Heart right ventricle (tissue), 16 donors: ENCODE measurements at regions of chr18 and their contacts with region 1.

Region 1: GRCh38 chr18:70454704-70455322 is 166.0 kb downstream of the SOCS6 start:
- DNase-seq: peak in 1 of 2 donors; percentile 31
- ATAC-seq: peak in 1 of 8 donors; percentile 53
- H3K4me3 ChIP-seq: no peak overlapping the region
- H3K27ac ChIP-seq: no peak overlapping the region
- H3K4me1 ChIP-seq: no peaks in the 10 kb centered on the region
- H3K27me3 ChIP-seq: peaks cover 0 to 25% (median 12%) of the 10 kb centered on the region in 7 donors
- CTCF ChIP-seq: peak; percentile 55 to 83 (median 78)

Region 2: DNA sequence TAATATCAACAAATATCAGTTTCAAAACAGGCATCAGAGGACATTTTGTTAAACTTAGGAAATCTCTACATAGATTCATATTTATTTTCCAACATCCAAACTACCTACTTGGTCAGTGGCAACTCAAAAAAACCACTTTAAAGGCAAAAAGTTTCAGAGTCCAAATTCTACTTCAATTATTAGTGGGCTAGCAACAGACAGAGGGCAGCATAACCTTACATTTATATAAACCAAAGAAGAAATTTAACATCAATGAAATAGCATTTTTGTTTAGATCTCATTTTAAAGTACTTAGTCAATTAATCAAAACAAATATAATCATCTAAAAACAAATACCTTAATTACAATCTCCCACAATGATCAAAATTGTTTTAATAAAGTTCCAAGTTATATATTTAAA is 282.6 kb before region 1 on chr18:
- intact Hi-C with region 1: loop called in 1 of 10 experiments (anchors 5 kb)
- DNase-seq: no peak
- ATAC-seq: no peak
- H3K4me3 ChIP-seq: no peak overlapping the region
- H3K27ac ChIP-seq: no peak overlapping the region
- H3K4me1 ChIP-seq: no peaks in the 10 kb centered on the region
- H3K27me3 ChIP-seq: no peaks in the 10 kb centered on the region
- CTCF ChIP-seq: peak in 7 of 9 donors; percentile 8 to 50 (median 37)

Region 3: DNA sequence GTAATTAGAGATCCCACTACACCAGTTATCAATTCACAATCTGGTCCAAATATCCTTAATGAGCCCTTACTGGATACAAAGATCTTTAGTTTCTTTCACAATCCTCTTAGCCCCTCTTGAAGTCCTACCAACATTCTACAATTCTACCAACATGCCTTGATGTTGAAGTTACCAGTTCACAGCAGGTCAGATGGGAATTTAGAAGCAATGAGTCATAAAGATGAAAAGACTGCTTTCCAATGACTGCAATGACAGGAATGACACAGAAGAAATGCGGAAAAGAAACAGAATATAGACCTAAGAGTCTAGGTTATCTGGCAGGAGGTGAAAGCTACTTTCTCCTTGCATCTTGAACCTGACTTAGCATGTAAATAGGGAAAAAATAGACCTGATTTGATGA is 273.8 kb before region 1 on chr18:
- intact Hi-C with region 1: loop called in 1 of 10 experiments (anchors 5 kb)
- DNase-seq: no peak
- ATAC-seq: peak in 1 of 8 donors; percentile 27
- H3K4me3 ChIP-seq: no peak overlapping the region
- H3K27ac ChIP-seq: peak overlapping the region in 3 of 10 donors; percentile 5 to 28 (median 19)
- H3K4me1 ChIP-seq: peaks cover 0 to 24% (median 6%) of the 10 kb centered on the region in 9 donors
- H3K27me3 ChIP-seq: no peaks in the 10 kb centered on the region
- CTCF ChIP-seq: no peak

Region 4: DNA sequence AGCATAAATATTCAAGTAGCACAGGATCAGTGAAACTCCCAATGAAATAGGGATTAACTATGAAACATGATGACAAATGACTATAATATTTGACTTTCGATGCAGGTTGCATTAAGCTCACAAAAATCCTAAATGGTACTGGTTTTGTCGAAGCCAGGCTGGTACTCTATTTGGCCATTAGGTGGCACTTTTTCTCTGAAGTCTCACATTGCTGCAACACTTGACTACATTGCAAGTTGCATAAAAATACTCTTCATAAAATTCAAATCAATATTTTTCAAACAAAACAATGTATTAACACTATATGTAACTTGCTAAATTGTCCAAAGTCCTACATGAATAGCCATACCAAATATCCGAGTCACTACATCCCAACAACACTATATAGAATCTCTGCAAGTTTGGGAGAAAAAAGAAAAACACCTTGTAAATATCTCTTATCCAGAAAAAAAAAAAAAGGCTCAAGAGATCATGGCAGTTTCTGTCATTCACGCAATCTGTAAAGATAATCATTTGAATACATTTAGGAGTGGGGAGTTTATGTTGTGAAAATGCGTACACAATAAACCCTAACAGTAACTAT is 258.9 kb before region 1 on chr18:
- intact Hi-C with region 1: loop called in 5 of 10 experiments (anchors 5 kb)
- DNase-seq: peak in 1 of 2 donors; percentile 26
- ATAC-seq: peak in 6 of 8 donors; percentile 47 to 81 (median 75)
- H3K4me3 ChIP-seq: no peak overlapping the region
- H3K27ac ChIP-seq: peak overlapping the region in 5 of 10 donors; percentile 13 to 52 (median 22)
- H3K4me1 ChIP-seq: peaks cover 0 to 7% (median 0%) of the 10 kb centered on the region in 9 donors
- H3K27me3 ChIP-seq: no peaks in the 10 kb centered on the region
- CTCF ChIP-seq: peak; percentile 64 to 87 (median 77)